Kidney (tissue), 22 donors: ENCODE measurements at regions of chr17 and their contacts with region 1.

Region 1: DNA sequence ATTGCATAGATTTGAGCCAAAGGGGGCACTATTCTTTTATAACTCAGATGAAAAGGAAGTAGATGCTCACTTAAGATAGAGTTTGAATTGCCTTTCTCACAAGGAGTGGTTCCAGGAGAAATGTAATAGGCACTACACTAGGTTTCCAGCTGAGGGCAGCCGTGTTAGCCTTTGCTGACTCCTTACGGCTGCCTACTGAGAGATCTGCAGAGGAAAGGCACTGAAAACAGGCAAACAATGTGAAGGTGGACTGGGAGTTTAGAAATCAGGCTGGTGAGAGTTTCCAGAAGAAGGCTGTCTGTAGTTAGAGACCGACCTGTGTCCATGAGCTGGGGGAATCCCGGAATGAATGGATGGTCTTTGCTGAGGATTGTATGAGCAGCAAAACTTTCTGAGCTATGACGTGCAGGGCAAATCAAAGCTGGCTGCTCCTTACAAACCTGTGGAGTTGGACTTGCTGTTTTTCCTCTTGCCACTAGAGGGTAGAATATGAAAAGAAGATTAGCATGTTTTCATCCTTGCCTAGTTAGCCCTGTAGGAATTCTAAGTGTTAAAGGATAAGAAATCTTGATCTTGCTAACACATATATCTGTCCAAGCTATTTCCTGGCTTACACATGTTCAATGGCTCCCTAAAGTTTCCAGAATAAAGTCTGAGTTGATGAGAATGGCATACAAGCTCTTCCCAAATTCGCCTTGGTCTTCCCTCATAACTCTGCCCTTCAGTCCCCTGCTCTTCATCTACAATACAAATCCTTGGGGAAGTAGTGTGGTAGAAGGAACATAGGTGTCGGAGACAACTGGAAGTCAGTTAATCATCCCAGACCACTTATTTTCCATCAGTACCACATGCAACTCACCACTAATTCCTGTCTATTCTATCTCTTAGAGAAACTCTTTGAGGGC is 20.1 kb upstream of the TAOK1 start:
- DNase-seq: peak in 4 of 5 donors; percentile 65 to 93 (median 84)
- H3K4me3 ChIP-seq: peak overlapping the region; percentile 9 to 58 (median 45)
- H3K27ac ChIP-seq: peak overlapping the region in 1 of 2 donors; percentile 51
- H3K4me1 ChIP-seq: no peaks in the 10 kb centered on the region
- H3K27me3 ChIP-seq: no peaks in the 10 kb centered on the region
- CTCF ChIP-seq: peak; percentile 85

Region 2: DNA sequence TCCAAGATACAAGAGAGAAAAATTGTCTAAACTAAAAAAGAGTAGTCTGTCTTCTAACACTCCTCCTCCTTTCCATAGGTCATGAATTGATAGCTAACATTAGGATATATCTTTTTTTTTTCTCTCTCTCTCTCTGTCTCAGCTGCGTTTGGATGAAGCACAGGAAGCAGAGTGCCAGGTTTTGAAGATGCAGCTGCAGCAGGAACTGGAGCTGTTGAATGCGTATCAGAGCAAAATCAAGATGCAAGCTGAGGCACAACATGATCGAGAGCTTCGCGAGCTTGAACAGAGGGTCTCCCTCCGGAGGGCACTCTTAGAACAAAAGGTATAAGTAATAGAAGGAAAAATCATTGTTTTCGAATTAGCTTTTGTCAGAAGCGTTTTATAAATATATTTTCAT is 163.9 kb after region 1 on chr17:
- intact Hi-C with region 1: loop called (anchors 10 kb)
- DNase-seq: no peak
- H3K4me3 ChIP-seq: no peak overlapping the region
- H3K27ac ChIP-seq: no peak overlapping the region
- H3K4me1 ChIP-seq: no peaks in the 10 kb centered on the region
- H3K27me3 ChIP-seq: no peaks in the 10 kb centered on the region
- CTCF ChIP-seq: no peak